BJ (cell line): ENCODE measurements at regions of chr17 and their contacts with region 1.

Region 1: DNA sequence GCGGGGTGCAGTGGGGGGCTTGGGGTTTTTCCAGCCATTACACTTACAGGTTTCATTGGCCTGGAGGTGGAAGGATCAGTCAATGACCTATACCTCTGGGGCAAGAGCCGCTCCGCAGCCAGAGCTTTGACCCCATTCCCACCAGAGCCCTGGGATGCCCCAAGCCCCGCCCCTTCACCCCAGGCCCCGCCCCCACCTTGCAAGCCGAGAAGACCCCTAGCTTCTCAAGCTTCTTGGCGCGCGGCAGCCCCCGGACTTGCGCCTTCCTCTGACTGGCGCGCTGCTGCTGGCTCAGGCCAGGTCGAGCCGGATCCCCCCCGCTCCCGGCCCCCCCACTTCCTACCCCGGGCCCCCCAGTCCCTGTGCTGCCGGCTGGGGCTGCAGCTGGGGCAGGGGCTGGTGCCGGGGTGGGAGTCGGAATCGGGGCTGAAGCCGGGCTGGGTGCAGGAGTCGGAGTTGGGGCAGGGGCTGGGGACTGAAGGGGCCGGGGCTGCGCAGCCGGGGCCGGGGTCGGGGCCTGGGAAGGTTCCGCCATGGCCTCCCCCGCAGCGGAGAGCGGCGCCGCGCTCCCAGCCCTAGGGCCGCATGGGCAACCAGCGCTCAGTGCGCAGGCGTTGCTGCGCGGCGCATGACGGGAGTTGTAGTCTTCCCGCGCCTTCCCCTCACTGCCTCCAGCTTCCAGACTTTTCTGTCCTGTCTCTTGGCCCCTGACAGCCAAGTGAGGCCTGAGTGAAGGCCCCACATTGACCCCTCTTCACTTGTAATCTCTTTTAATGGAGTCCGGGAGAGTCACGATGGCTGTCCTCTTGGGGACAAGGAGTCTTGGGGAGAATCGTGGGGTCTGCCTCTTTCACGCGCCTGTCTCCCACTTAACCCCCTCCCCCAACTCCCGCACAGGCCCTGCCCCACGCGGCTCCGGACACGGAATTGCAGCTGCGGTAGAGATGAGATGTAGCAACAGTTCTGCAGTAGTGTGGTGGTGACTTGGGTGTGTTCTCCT is at the start of gene KAT2A:
- DNase-seq: no peak
- H3K4me3 ChIP-seq: peak within 1 kb of the TSS; percentile 69
- H3K27me3 ChIP-seq: no peaks in the 10 kb centered on the region
- CTCF ChIP-seq: no peak
- polyA plus RNA-seq, gene KAT2A: 18.2 and 25.2 TPM in 2 replicates

Region 2: GRCh38 chr17:42019509-42020404 is 101.3 kb before region 1 on chr17 and contains the start of gene NKIRAS2:
- CTCF ChIA-PET with region 1: interaction called, 61 read pairs
- POLR2A ChIA-PET with region 1: no interaction called
- DNase-seq: peak; percentile 34
- H3K4me3 ChIP-seq: peak within 1 kb of the TSS; percentile 76
- H3K27me3 ChIP-seq: no peaks in the 10 kb centered on the region
- CTCF ChIP-seq: peak; percentile 92
- polyA plus RNA-seq, gene NKIRAS2: 55.9 and 81.4 TPM in 2 replicates

Region 3: GRCh38 chr17:42183741-42184711 is 63.0 kb after region 1 on chr17:
- CTCF ChIA-PET with region 1: interaction called, 32 read pairs
- POLR2A ChIA-PET with region 1: no interaction called
- DNase-seq: no peak
- H3K4me3 ChIP-seq: peak overlapping the region; percentile 46
- H3K27me3 ChIP-seq: peaks cover 21% of the 10 kb centered on the region
- CTCF ChIP-seq: peak; percentile 59

Region 4: GRCh38 chr17:42212382-42212781 is 91.3 kb after region 1 on chr17:
- CTCF ChIA-PET with region 1: no interaction called
- POLR2A ChIA-PET with region 1: no interaction called
- DNase-seq: no peak
- H3K4me3 ChIP-seq: no peak overlapping the region
- H3K27me3 ChIP-seq: no peaks in the 10 kb centered on the region
- CTCF ChIP-seq: no peak